PC-9 (cell line): ENCODE measurements at regions of chr2 and their contacts with region 1.

Region 1: GRCh38 chr2:223797811-223798721 is 39.3 kb downstream of the AP1S3 start:
- DNase-seq: peak; percentile 46 to 73
- H3K4me3 ChIP-seq: no peak overlapping the region
- H3K27ac ChIP-seq: peak overlapping the region; percentile 95
- H3K4me1 ChIP-seq: peaks cover 76% of the 10 kb centered on the region
- H3K27me3 ChIP-seq: no peaks in the 10 kb centered on the region
- CTCF ChIP-seq: peak; percentile 95

Region 2: DNA sequence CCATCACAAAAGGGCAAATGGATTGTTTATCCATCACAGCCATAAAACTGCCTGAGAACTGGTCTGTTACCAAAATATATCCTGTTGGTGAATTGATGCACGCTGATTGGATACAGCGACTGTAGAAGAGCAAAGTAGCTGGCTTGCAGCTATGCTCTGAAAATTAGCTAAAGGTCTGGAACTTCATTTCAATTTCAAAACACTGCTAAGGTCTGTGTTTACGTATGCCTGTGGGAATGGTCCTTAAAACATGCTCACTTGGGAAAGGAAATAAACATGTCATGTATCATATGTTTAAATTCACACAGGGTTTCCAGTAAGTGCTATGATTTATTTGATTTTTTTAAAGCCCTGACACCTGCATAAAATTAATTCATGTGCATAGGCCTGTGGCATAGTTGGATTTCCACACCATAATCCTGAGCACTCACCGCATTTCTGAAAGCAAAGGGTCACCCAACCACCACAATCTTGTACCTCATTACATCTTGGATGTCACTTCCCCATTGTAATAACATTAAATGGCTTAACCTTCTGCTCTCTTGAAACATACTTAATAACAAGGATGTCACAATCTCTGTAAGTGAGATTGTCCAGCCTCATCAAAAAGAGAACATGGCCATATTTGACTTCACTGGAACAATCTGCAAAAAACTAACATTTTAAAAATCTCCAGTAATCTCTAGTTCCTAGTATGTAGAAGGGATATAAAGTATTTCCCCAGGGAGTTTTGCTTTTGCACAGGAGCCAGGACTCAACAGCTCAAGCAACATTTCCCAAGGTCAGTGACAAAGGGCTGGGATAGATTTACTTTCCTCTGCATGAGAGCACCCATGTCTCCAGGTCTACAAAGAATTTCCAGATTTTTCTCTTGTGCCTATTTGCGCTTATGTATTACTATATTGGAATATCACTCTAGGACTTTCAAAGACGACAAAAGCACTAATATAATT is 1251.9 kb before region 1 on chr2:
- CTCF ChIA-PET with region 1: interaction called, 13 read pairs
- POLR2A ChIA-PET with region 1: no interaction called
- intact Hi-C with region 1: no loop called
- DNase-seq: no peak
- H3K4me3 ChIP-seq: no peak overlapping the region
- H3K27ac ChIP-seq: no peak overlapping the region
- H3K4me1 ChIP-seq: no peaks in the 10 kb centered on the region
- H3K27me3 ChIP-seq: no peaks in the 10 kb centered on the region
- CTCF ChIP-seq: no peak

Region 3: DNA sequence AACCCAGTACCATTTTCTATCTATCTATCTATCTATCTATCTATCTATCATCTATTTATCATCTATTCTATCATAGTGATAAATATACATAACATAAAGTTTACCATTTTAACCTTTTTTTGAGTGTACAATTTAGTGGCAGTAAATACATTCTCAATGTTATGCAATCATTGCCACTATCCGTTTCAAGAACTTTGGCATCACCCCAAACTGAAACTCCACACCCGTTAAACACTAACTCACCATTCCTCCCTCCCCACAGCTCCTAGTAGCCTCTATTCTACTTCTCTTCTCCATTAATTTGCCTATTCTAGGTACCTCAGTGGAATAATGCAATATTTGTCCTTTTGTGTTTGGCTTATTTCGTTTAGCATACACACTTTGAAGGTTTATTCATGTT is 828.6 kb before region 1 on chr2:
- CTCF ChIA-PET with region 1: interaction called, 16 read pairs
- POLR2A ChIA-PET with region 1: interaction called, 3 read pairs
- intact Hi-C with region 1: loop called (anchors 1 kb)
- DNase-seq: peak in 1 of 2 experiments; percentile 61
- H3K4me3 ChIP-seq: no peak overlapping the region
- H3K27ac ChIP-seq: no peak overlapping the region
- H3K4me1 ChIP-seq: peaks cover 18% of the 10 kb centered on the region
- H3K27me3 ChIP-seq: no peaks in the 10 kb centered on the region
- CTCF ChIP-seq: no peak

Region 4: DNA sequence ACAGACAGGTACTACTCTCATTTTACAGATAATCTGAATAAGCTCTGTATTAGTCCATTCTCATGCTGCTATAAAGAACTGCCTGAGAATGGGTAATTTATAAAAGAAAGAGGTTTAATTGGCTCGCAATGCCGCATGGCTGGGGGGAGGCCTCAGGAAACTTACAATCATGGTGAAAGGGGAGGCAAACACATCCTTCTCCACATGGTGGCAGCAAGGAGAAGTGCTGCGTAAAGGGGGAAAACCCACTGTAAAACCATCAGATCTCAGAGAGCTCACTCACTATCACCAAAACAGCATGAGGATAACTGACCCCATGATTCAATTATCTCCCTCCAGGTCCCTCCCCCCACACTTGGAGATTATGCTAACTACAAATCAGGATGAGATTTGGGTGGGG is 491.7 kb before region 1 on chr2:
- CTCF ChIA-PET with region 1: no interaction called
- POLR2A ChIA-PET with region 1: no interaction called
- intact Hi-C with region 1: loop called (anchors 1 kb)
- DNase-seq: peak in 1 of 2 experiments; percentile 18
- H3K4me3 ChIP-seq: no peak overlapping the region
- H3K27ac ChIP-seq: no peak overlapping the region
- H3K4me1 ChIP-seq: no peaks in the 10 kb centered on the region
- H3K27me3 ChIP-seq: no peaks in the 10 kb centered on the region
- CTCF ChIP-seq: peak; percentile 71

Region 5: DNA sequence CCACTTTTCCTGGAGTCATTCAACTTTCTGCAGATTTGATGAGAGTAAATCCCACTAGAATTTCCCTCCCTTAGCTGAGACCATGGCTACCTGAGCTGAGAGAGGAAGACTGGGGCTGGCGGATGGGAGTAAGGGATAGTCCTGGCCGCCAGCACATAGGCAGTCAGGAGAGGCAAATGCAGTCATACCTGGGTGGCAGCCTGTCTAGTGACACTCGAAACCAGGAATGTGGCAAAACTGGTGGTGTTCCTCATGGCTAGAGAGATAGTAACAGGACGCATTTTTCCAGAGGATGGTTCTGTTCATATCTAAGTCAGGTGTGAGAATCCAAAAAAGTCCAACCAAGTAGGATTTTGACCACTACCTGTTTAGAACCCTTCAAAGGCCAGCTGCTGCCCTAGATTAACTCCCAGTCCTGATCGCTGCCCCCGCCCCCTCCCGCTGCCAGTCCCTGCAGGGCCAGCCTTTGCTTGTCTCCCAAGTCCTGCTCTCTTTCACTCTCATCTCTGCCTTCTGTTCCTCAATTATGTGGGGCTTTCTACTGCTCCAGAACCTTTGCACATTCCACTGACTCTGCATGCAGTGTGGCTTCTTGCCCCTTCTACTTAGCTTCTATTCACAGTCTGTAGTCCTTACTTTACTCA is 178.5 kb before region 1 on chr2:
- CTCF ChIA-PET with region 1: no interaction called
- POLR2A ChIA-PET with region 1: no interaction called
- intact Hi-C with region 1: no loop called
- DNase-seq: peak; percentile 81 to 86
- H3K4me3 ChIP-seq: no peak overlapping the region
- H3K27ac ChIP-seq: no peak overlapping the region
- H3K4me1 ChIP-seq: peaks cover 13% of the 10 kb centered on the region
- H3K27me3 ChIP-seq: no peaks in the 10 kb centered on the region
- CTCF ChIP-seq: no peak

Region 6: DNA sequence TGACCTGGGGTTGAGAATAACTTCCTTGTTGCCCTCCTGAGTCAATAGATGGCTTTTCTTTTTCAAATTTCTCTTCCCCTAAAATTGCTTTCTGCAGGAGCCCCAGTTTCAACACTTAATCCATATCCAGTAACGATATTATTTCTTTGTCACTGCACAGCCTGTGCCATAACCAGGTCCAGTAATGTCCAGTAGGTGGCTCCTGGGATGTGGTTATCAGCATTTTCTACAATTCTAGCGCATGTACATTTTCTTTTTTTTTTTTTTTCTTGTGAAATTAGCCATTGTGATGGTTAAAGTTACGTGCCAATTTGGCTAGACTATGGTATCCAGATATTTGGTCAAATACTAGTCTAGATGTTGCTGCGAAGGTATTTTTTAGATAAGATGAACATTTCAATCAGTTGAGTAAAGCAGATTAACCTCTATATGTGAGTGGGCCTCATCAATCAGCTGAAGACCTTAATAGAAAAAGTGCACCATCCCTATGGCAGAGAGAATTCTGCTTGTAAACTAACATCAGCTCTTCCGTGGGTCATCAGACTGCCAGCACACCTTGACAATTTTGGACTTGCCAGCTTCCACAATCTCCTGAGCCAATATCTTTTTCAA is 123.0 kb before region 1 on chr2:
- CTCF ChIA-PET with region 1: no interaction called
- POLR2A ChIA-PET with region 1: interaction called, 5 read pairs
- intact Hi-C with region 1: loop called (anchors 1 kb)
- DNase-seq: peak; percentile 50 to 64
- H3K4me3 ChIP-seq: no peak overlapping the region
- H3K27ac ChIP-seq: no peak overlapping the region
- H3K4me1 ChIP-seq: no peaks in the 10 kb centered on the region
- H3K27me3 ChIP-seq: no peaks in the 10 kb centered on the region
- CTCF ChIP-seq: peak; percentile 94

Region 7: GRCh38 chr2:223815186-223815883 is 17.3 kb after region 1 on chr2:
- CTCF ChIA-PET with region 1: interaction called, 5 read pairs
- POLR2A ChIA-PET with region 1: interaction called, 7 read pairs
- intact Hi-C with region 1: loop called (anchors 1 kb)
- DNase-seq: peak; percentile 75 to 100
- H3K4me3 ChIP-seq: peak overlapping the region; percentile 0; the same call in 1 of the 2 replicates
- H3K27ac ChIP-seq: peak overlapping the region; percentile 79
- H3K4me1 ChIP-seq: peaks cover 62% of the 10 kb centered on the region
- H3K27me3 ChIP-seq: no peaks in the 10 kb centered on the region
- CTCF ChIP-seq: no peak